GM10248 (cell line): ENCODE measurements at regions of chr15 and their contacts with region 1.

Region 1: GRCh38 chr15:79380755-79381497 is 51.2 kb upstream of the MINAR1 start:
- DNase-seq: peak; percentile 72
- CTCF ChIP-seq: peak; percentile 86

Region 2: GRCh38 chr15:79357566-79357965 is 23.4 kb before region 1 on chr15:
- CTCF ChIA-PET with region 1: interaction called, 20 read pairs
- POLR2A ChIA-PET with region 1: no interaction called
- DNase-seq: no peak
- CTCF ChIP-seq: no peak

Region 3: DNA sequence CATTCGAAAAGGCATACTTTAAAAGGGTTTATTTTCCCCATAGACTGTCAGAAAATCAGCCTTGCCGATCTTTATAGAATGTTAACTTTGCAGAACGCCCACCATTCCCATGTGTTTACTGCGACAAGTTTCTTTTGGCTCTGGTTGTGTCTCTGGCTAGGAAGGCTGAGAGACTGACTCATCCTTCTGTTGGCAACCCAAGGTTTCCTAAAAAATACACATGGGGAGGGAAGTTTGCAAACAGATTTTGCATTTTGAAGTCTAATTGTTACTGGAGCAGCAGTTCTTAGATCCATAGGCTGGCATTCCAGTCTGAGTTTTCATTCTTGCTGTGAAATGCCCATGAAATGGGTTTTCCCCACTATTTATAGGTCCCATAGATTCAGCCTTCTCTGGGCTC is 13.3 kb after region 1 on chr15:
- CTCF ChIA-PET with region 1: interaction called, 43 read pairs
- POLR2A ChIA-PET with region 1: no interaction called
- DNase-seq: no peak
- CTCF ChIP-seq: no peak

Region 4: DNA sequence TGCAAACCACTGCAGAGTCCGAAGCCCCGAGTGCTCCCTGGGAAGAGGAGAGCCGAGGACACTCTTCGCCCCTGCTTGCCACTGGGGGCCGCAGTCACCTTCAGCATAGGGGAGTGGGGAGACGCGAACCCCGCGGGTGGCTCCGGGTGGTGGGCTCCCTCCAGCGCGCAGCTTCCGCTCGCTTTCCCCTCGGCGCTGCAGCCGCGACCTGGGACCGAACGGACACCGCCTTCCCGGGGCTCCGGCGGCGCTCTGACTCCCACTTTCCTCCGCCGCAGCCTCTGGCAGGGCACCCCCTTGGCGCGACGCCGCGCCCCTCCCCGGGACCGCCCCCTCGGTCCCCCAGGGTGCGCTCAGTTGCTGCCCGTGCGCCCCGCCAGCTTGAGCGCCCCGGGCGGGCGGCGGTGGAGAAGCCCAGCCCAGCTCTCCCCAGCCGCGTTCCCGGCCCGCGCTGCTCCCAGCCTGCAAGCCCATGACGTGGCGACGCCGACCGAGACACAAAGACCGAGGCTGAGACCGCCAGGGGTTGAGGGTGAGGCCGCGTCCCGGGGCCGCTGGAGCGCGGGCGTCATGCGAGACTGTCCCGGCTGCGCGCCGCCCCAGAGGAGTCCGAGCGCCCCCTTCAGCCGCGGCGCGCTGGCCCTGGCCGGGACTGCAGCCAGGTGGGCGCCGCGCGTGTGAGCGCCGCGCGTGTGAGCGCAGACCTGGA is 50.9 kb after region 1 on chr15 and contains the start of gene MINAR1:
- CTCF ChIA-PET with region 1: interaction called, 15 read pairs
- POLR2A ChIA-PET with region 1: no interaction called
- DNase-seq: peak; percentile 29
- CTCF ChIP-seq: no peak

Region 5: GRCh38 chr15:79743031-79743430 is 362.1 kb after region 1 on chr15:
- CTCF ChIA-PET with region 1: no interaction called
- POLR2A ChIA-PET with region 1: no interaction called
- DNase-seq: no peak
- CTCF ChIP-seq: no peak

Region 6: DNA sequence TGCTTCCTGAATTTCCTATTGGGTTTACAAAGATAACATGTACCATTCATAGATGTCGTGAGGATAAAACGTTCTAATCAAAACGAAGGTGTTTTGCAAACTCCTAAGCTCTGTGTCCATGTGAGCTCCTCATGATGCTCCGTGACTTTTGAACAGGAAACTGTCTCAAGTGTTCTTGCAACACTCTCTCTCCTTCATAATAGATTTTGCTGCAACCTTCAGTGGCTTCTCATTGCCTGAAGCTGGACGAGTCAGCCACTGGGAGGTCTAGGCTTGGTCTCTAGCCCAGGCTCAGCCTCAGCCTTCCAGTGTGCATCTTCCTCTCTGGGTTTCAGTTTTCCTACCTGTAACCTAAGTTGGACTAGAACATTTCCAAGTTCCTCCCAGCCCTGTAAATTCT is 608.8 kb after region 1 on chr15:
- CTCF ChIA-PET with region 1: interaction called, 16 read pairs
- POLR2A ChIA-PET with region 1: no interaction called
- DNase-seq: no peak
- CTCF ChIP-seq: no peak